ENCODE measurements at regions of chr12 and their contacts with region 1.

Region 1: GRCh38 chr12:92363295-92364146 is 217.9 kb upstream of the BTG1 start:
- DNase-seq: peak; percentile 21 to 80 (median 58)
- ATAC-seq: peak; percentile 72 to 82
- H3K4me3 Mint-ChIP-seq: peak overlapping the region; percentile 70 to 88 (median 84)
- H3K27ac Mint-ChIP-seq: peak overlapping the region; percentile 91 to 99 (median 97)
- H3K4me1 Mint-ChIP-seq: peaks cover 31 to 78% (median 71%) of the 10 kb centered on the region in 4 donors
- H3K27me3 Mint-ChIP-seq: no peaks in the 10 kb centered on the region

Region 2: DNA sequence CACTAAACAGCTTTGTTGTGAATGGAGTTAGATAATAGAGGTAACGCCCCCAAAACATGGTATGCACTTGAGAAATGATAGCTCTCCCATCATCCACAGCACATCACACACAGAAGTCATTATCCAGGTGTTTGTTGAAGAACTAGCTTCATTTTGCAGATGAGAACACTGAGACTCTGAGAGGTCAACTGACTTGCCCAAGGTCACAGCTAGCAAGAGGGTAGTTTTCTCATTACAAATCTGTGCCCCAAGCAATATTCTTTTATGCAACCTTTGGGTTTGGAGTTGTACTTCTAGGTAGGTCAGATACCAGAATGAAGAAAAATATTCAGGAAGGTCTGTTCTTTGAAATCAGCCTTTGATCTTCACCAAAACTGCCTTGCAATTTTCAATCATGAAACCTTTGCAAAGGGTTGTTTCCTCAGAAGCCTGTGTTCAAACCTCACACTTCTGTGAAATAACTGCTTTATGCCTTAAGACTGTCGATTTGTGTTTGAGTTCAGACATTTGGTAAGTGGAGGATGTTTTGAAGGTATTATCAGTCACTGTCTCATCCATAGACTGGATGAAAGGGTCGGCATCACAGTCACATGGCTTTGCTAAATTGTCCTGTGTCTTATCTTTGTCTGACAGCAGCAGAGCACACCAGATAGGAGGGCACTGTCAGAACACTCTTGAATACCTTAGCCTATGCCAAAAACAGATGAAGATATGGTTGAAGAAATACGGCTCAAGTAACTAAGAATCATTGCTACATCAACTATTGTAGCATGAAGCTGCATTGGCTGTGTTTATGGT is 15.4 kb after region 1 on chr12:
- POLR2A ChIA-PET with region 1: interaction called, 30 read pairs
- DNase-seq: peak in 5 of 10 donors; percentile 7 to 65 (median 38)
- ATAC-seq: peak; percentile 89 to 92
- H3K4me3 Mint-ChIP-seq: peak overlapping the region in 9 of 10 donors; percentile 7 to 73 (median 45)
- H3K27ac Mint-ChIP-seq: peak overlapping the region; percentile 80 to 98 (median 92)
- H3K4me1 Mint-ChIP-seq: peaks cover 37 to 71% (median 62%) of the 10 kb centered on the region in 4 donors
- H3K27me3 Mint-ChIP-seq: no peaks in the 10 kb centered on the region

Region 3: GRCh38 chr12:92396647-92397252 is 33.2 kb after region 1 on chr12:
- POLR2A ChIA-PET with region 1: interaction called, 38 read pairs
- DNase-seq: no peak
- ATAC-seq: no peak
- H3K4me3 Mint-ChIP-seq: peak overlapping the region in 8 of 10 donors; percentile 18 to 94 (median 53)
- H3K27ac Mint-ChIP-seq: peak overlapping the region; percentile 95 to 99 (median 97)
- H3K4me1 Mint-ChIP-seq: peaks cover 48 to 98% (median 92%) of the 10 kb centered on the region in 4 donors
- H3K27me3 Mint-ChIP-seq: no peaks in the 10 kb centered on the region

Region 4: GRCh38 chr12:92408072-92408900 is 44.8 kb after region 1 on chr12:
- POLR2A ChIA-PET with region 1: interaction called, 29 read pairs
- DNase-seq: peak in 4 of 10 donors; percentile 18 to 40 (median 32)
- ATAC-seq: no peak
- H3K4me3 Mint-ChIP-seq: peak overlapping the region in 5 of 10 donors; percentile 8 to 57 (median 28)
- H3K27ac Mint-ChIP-seq: peak overlapping the region; percentile 16 to 88 (median 68)
- H3K4me1 Mint-ChIP-seq: peaks cover 20 to 70% (median 64%) of the 10 kb centered on the region in 4 donors
- H3K27me3 Mint-ChIP-seq: no peaks in the 10 kb centered on the region

Region 5: DNA sequence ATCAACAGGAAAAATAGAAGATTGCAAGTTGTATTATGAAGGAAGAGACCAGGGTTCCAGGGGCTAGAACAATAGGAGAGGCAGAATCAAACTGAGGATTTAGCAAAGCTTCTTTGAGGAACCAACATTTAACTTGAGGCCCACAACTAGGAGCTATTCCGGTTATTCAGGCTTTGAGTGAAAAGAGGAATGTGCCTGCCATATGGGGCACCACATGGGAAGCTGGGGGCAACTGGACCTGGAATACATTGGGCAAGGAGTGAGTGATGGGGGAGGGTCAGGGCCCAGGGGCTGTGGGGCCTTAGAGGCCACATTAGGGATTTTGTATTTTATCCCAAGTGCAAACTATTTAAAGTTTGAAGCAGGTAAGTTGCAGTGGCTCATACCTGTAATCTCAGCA is 595.3 kb after region 1 on chr12:
- POLR2A ChIA-PET with region 1: no interaction called
- DNase-seq: no peak
- ATAC-seq: no peak
- H3K4me3 Mint-ChIP-seq: no peak overlapping the region
- H3K27ac Mint-ChIP-seq: no peak overlapping the region
- H3K4me1 Mint-ChIP-seq: no peaks in the 10 kb centered on the region
- H3K27me3 Mint-ChIP-seq: no peaks in the 10 kb centered on the region

Measured in naive thymus-derived CD8-positive, alpha-beta T cell (primary cell).